Posterior cingulate gyrus (tissue), 11 donors: ENCODE measurements at regions of chr5 and their contacts with region 1.

Region 1: DNA sequence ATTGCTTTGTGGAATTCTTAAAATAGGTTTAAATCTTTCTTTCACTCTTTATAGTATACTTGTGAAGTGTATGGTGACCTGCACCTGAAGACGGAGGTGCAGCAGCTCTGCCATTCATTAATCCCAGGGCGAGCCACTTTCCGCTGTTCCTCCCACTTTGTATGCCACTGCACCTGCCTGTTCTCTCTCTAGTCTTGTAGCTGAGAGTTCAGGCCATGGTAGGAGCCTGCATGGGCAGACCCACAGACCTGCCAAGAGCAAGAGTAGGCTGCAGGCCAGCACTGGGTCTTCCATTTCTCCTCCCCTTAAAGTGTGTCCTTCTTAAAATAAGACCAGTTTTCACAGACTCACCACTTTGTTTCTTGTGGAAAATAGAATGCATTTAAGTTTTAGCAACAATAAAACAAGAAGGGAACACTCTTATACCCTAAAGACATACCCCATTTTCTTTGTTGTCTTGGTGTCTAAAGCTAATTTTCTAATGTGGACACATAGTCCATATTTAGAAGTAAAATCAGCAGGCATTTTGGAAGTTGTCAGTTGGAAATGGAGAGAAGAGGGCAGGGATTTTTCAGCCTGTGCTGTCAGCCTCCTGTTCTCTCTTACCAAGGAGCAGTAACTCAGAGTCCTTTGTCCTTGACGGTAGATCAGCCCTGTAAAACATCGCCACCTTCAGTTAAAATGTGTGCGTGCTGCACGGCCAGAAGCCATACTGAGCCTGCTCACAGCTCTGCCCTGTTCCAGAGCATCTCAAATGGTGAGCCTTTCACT is 103.2 kb downstream of the SNCAIP start:
- DNase-seq: peak in 9 of 10 donors; percentile 23 to 92 (median 60)

Region 2: DNA sequence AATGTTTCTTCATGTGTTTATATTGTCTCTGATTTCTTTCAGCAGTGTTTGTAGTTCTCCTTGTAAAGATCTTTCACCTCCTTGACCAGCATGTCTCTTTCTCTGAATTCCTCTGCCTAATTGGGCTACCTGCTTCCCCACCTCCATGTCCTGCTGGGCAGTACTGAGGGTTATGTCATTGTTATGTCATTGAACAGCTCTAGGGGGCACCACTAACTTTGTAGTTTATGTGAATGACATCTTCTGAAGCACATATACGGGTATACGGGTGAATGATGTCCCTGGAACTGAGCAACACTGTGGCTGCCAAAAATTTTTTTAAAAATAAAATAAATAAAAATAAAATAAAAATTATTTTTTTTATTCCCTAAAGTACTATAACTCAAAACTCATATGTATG is 120.1 kb before region 1 on chr5:
- intact Hi-C with region 1: loop called (anchors 10 kb)
- DNase-seq: no peak

Region 3: GRCh38 chr5:122306461-122306860 is 108.8 kb before region 1 on chr5:
- intact Hi-C with region 1: no loop called
- DNase-seq: no peak